GM13977 (cell line): ENCODE measurements at regions of chr20 and their contacts with region 1.

Region 1: DNA sequence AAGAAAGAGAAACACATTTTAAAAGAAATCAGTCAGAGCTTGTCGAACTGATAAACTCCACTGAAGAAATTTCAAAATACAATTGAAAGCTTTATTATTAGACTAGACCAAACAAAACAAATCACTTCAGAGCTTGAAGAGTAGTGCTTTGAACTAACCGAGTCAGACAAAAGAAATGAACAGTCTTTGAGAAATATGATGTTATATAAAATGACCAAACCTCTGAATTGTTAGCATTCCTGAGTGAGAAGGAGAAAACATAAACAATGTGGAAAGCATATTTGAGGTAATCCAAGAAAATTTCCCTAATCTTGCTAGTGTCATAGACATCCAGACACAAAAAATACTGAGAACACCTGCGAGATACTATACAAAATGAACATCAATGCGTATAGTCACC is 13.2 kb upstream of the CST4 start:
- DNase-seq: no peak
- CTCF ChIP-seq: no peak

Region 2: DNA sequence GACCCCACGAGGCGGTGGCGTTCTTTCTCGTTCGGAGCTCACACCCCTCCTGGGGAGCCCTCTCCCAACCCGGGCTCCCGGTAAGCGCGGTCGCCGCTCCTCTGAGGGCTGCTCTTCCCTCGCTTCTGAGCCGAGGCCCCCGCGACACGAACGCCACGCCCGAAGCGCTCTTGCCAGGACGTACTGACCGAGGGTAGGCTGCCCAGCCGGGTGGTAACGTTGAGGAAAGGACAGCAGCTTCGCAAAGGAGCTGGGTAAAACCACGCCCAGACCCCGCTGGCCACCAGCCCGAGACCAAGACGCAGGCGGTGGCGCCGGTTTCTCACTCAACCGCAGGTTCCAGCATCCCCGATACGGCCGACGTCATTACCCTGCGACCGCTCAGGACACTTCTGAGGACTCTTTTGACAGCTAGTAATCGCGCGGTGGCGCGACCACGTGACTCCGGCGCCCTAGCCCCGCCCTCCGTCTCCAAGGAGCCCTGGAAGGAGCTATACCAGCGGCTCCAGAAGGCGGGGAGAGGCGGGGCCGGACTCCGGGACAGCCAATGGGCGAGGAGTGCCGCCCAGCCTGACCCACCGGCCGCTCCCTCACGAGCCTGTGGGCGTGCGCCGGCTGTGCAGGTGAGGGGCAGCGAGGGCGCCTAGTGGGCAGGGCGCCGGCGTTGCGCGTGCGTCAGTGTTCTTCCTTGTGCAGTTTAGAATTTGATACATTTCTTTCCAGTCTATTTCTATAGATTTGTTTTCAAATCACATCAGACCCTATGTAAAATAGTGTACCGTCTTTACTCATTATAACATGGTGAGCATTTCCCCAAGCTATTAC is 344.0 kb before region 1 on chr20:
- in situ Hi-C with region 1: no loop called
- DNase-seq: peak; percentile 94
- CTCF ChIP-seq: no peak

Region 3: DNA sequence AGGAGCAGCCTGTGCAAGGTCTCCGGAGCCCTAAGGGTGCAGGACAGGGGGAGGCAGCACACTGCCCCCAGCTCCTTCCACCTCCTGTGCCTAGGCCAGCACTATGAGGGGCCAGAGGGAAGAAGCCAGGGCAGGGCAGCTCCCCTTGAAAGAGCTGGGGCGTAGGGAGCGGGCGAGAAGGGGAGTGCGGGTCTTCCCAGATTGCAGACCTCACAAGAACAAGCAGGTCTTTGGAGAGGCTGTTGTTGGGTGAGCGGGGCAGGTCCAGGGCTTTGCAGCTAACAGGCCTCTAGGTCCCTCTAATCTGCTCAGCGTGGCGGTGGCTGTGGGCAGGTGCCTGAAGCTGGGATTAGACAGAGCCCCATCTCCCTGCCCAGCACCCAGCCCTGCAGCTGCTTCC is 71.1 kb after region 1 on chr20:
- in situ Hi-C with region 1: no loop called
- DNase-seq: no peak
- CTCF ChIP-seq: no peak

Region 4: DNA sequence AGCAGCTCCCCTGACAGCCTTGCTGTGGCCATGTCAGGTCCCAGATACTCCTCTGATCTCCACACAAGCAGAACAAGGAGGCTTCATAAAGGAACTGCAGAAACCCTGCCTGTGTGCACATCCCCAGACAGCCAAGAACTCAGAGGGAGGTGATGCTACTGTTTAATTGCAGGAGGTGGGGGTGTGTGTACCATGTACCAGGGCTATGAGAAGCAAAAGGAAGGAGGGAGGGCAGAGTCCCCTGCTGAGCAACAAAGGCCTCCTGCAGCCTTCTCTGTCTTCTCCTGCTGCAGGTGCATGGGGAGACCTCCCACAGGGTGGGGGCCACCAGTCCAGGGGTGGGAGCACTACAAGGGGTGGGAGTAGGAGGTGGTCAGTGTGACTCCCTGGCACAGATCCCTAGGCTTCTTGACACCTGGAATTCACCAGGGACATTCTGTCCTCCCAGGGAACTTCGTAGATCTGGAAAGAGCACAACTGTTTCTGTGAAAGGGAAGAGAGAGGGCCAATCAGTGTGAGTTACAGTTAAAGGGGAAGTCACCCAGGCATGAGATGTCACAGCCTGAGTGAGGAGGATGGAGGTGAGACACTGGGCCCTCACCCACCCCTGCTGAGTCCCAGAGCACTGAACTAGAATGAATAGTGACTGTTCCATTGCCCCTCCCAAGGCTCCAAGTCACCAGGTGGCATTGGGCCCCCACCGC is 121.8 kb after region 1 on chr20:
- in situ Hi-C with region 1: loop called (anchors 25 kb)
- DNase-seq: no peak
- CTCF ChIP-seq: no peak